A549 (cell line): ENCODE measurements at regions of chr1 and their contacts with region 1.

Region 1: DNA sequence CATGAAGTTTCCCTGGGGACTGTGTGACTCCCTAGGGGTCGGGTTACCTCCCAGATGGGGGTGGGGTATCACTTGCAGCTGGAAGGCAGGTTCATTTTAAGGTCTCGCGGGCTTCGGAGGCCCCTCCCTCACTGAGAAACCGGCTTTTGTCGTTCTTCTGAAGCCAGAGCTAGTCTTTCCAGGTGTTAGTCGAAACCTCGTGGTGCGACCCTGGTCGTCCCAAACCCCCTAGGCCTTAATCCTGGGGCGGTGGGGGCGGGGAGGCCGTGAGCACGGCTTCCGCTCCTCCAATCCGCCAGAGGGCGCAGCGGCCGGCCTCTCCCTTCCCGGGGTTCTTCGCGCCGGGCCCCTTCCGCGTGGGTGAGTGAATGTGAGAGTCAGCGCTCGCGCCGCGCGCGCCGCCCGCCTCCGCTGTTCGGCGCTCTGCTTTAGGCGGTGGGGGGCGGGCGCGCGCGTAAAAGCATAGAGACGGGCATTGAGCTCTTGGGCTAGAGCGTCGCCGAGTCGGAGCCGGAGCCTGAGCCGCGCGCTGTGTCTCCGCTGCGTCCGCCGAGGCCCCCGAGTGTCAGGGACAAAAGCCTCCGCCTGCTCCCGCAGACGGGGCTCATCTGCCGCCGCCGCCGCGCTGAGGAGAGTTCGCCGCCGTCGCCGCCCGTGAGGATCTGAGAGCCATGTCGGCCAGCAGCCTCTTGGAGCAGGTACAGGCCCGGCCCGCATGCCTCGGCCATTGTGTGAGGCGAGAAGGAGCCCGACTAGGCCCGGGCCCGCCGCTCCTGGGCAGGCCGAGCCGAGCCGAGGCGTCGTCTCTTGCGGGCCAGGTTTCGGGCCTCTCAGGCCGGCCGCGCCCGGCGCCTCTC is at the start of gene YTHDF2:
- DNase-seq: peak; percentile 69 to 95
- ATAC-seq: peak; percentile 96 to 98
- H3K4me3 ChIP-seq: peak within 1 kb of the TSS; percentile 98
- H3K27ac ChIP-seq: peak within 1 kb of the TSS; percentile 98 to 100
- H3K4me1 ChIP-seq: peaks cover 19% of the 10 kb centered on the region; the same call in 2 of the 3 replicates
- CTCF ChIP-seq: peak; percentile 69
- EP300 ChIP-seq: no peak
- POLR2A ChIP-seq: peak; percentile 17; the same call in 1 of the 2 replicates
- RAD21 ChIP-seq: 0 out of 5 replicates have a peak, but pooled peaks of 1 of the 2 experiments have one; percentile 24
- polyA plus RNA-seq, gene YTHDF2: 55.6 and 59.3 TPM in 2 replicates

Region 2: DNA sequence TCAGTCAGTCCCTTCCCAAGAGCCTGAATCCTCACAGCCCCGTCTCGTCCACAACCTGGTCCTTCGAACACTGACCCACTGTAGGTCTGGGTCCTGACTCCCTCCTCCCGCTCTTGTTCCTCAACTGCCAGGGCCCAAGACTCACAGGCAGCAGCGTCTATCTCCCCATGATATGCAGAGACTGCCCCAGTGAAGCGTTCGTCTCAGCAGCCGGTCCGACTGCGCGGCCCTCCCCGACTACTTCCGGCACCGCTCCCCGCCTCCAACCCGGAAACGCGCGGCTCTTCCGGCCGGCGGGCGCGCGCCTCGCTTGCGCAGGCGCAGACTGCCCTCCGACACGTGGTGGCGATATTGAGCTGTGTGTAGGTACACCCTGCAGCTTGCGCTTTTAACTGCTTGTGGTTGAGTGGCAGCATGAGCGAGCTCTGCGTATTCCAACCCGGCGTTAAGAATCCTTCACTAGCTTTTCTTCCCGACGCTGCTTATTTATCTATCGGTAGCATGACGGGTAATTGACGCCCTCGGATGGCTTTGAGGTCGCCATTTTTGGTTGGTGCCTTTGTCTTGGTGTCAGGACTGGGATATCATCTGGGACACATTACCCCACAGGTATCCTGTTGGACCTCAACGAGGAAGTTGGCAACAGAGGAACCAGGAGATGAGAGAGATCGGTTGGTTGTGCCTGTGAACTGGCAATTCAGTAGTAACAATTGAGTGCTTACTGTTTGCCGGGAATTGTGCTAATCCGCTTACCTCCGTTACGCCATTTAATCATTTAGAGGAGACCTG is 93.6 kb before region 1 on chr1 and contains the start of gene TAF12:
- CTCF ChIA-PET with region 1: interaction called, 4 read pairs
- POLR2A ChIA-PET with region 1: interaction called, 23 read pairs
- DNase-seq: peak; percentile 82 to 94
- ATAC-seq: peak; percentile 95 to 96
- H3K4me3 ChIP-seq: peak within 1 kb of the TSS; percentile 67
- H3K27ac ChIP-seq: peak within 1 kb of the TSS; percentile 95 to 97
- H3K4me1 ChIP-seq: peaks cover 24% of the 10 kb centered on the region; the same call in 2 of the 3 replicates
- CTCF ChIP-seq: peak; percentile 40
- EP300 ChIP-seq: no peak
- POLR2A ChIP-seq: peak; percentile 99
- RAD21 ChIP-seq: peak; percentile 20 to 45; a peak in 3 of 5 replicates
- polyA plus RNA-seq, gene TAF12: 33.8 and 38.3 TPM in 2 replicates

Region 3: GRCh38 chr1:28648474-28649198 is 88.0 kb before region 1 on chr1 and contains the start of gene RNU11:
- CTCF ChIA-PET with region 1: interaction called, 9 read pairs
- POLR2A ChIA-PET with region 1: interaction called, 23 read pairs
- DNase-seq: peak; percentile 77 to 97
- ATAC-seq: peak; percentile 88 to 93
- H3K4me3 ChIP-seq: peak within 1 kb of the TSS; percentile 40
- H3K27ac ChIP-seq: peak within 1 kb of the TSS; percentile 96 to 97
- H3K4me1 ChIP-seq: peaks cover 15% of the 10 kb centered on the region; the same call in 2 of the 3 replicates
- CTCF ChIP-seq: no peak
- EP300 ChIP-seq: 0 out of 5 replicates have a peak, but pooled peaks of 1 of the 2 experiments have one; percentile 29
- POLR2A ChIP-seq: peak; percentile 99
- RAD21 ChIP-seq: no peak
- polyA plus RNA-seq, gene RNU11: not detected in 2 replicates

Region 4: DNA sequence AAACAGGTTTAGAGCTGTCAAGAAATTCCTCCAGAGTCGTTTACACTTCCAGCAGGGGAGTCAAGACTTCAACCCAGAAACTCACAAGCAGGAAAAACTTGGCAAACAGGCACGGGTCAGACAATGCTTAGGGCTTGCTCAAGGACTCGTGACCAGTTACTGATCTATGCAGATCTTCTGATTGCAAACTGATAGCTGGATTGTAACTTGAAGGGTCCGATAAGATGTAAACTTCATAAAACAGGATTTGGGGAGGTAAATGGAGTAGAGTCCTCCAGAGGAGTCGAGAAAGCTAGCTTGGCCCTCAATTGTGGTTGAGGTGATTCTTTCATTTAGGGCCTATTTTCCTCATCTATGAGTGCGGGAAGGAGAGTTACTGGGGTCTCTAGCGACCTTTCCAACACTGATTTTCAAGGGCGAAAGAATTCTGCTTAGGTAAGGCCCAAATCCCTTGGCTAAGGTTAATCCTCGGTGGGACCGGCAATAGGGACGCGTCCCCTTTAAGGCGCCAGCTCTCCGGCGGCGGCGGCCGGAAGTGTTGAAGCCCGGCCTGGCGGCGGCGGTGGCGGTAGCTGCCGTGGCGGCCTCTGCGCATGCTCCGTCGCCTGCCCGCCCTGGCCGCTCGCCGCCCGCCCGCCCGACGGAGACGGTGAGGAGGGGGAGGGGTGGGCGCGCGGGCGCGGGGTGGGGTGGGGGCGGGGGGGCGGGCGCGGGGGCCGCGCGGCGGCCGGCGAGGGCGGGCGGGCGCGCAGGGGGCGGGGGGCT is 68.3 kb before region 1 on chr1 and contains the start of gene GMEB1:
- CTCF ChIA-PET with region 1: interaction called, 8 read pairs
- POLR2A ChIA-PET with region 1: interaction called, 27 read pairs
- DNase-seq: peak; percentile 69 to 87
- ATAC-seq: peak; percentile 89 to 94
- H3K4me3 ChIP-seq: peak within 1 kb of the TSS; percentile 100
- H3K27ac ChIP-seq: peak within 1 kb of the TSS; percentile 100
- H3K4me1 ChIP-seq: peaks cover 4% of the 10 kb centered on the region; the same call in 1 of the 3 replicates
- CTCF ChIP-seq: no peak
- EP300 ChIP-seq: no peak
- POLR2A ChIP-seq: no peak
- RAD21 ChIP-seq: no peak
- polyA plus RNA-seq, gene GMEB1: 6.9 and 7.1 TPM in 2 replicates

Region 5: GRCh38 chr1:28720376-28720775 is 16.3 kb before region 1 on chr1:
- CTCF ChIA-PET with region 1: interaction called, 31 read pairs
- POLR2A ChIA-PET with region 1: interaction called, 5 read pairs
- DNase-seq: no peak
- ATAC-seq: no peak
- H3K4me3 ChIP-seq: no peak overlapping the region
- H3K27ac ChIP-seq: no peak overlapping the region
- H3K4me1 ChIP-seq: peaks cover 7% of the 10 kb centered on the region; the same call in 2 of the 3 replicates
- CTCF ChIP-seq: no peak
- EP300 ChIP-seq: no peak
- POLR2A ChIP-seq: no peak
- RAD21 ChIP-seq: no peak

Region 6: DNA sequence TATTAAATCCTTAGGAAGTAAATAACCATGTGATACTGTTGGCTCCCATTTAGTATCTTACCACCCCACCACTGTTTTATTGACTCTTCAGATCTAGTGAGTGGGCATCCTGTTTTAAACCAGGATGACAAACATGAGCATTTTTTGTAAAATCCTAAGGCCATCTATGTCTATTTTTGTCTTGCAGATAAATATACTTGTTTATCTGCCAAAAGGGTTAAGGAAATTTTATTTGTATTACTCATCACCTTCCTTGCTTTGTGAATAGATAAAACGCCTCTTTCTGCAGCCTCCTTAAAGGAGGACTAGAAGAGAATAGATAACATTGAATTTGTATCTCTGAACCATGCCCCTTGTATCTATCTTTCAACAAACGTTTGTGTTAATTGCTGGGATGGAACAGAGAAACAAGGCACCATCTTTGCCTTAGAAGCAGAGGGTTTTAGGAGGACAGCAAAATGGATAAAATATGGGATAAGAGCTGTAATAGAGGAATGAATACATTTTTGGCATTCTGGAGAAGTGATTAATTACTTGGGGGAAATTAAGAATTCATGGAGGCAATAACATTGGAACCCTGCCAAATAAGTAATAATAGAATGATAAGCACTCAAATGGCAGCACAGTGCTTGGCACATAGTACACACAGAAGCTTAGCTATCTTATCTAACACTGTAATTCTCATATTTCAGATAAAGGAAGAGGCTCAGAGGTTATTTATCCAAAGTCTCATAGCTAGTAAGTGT is 14.8 kb after region 1 on chr1:
- CTCF ChIA-PET with region 1: interaction called, 20 read pairs
- POLR2A ChIA-PET with region 1: interaction called, 10 read pairs
- DNase-seq: no peak
- ATAC-seq: peak in 1 of 2 experiments; percentile 30; a peak in 2 of 6 replicates
- H3K4me3 ChIP-seq: no peak overlapping the region
- H3K27ac ChIP-seq: no peak overlapping the region
- H3K4me1 ChIP-seq: peaks cover 33% of the 10 kb centered on the region
- CTCF ChIP-seq: no peak
- EP300 ChIP-seq: no peak
- POLR2A ChIP-seq: no peak
- RAD21 ChIP-seq: no peak

Region 7: DNA sequence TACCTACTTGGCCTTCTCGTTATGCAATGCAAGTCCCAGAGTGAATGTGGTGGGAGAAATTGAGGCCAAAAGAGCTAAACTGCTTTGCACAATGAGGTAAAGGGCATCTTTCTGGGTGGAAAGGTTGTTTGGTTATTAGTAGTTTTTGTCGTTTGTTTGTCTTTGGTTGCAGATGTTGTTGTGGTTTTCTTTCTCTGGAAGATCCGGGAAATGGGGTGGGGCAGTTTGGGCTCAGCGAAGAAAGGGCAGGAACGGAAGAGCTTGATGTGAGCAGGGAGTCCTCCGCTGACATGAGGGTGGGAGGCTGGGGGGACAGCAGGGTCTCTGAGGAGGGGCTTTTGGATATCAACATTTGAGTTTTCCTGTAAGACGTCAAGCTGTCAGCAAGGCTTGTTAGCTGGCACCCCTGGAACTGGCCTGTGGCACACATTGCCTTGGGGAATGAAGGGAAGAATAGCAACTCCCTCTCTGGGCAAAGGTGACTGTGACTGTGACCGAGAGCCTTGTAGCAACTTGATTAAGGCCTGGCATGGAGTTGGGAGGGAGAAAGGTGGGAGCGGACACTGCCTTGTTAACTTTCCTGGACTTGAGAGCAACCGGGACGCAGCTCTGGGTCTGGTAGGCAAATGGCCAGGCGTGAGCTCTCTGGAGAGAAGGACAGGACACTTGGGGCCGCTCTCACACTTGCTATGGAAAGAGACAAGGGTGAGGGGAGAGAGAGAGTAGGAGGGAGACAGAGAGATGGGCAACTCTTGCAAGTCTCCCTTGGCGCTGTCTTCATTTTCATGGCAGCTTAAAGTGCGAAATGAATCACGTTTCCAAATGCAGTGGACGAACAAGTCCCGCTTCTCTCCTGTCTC is 59.9 kb after region 1 on chr1:
- CTCF ChIA-PET with region 1: no interaction called
- POLR2A ChIA-PET with region 1: no interaction called
- DNase-seq: no peak
- ATAC-seq: peak in 1 of 2 experiments; percentile 51; a peak in 3 of 6 replicates
- H3K4me3 ChIP-seq: no peak overlapping the region
- H3K27ac ChIP-seq: no peak overlapping the region
- H3K4me1 ChIP-seq: no peaks in the 10 kb centered on the region
- CTCF ChIP-seq: no peak
- EP300 ChIP-seq: no peak
- POLR2A ChIP-seq: no peak
- RAD21 ChIP-seq: peak in 1 of 2 experiments; percentile 36; a peak in 1 of 5 replicates

Region 8: GRCh38 chr1:28905921-28906666 is 169.4 kb after region 1 on chr1:
- CTCF ChIA-PET with region 1: no interaction called
- POLR2A ChIA-PET with region 1: no interaction called
- DNase-seq: no peak
- ATAC-seq: no peak
- H3K4me3 ChIP-seq: no peak overlapping the region
- H3K27ac ChIP-seq: no peak overlapping the region
- H3K4me1 ChIP-seq: no peaks in the 10 kb centered on the region
- CTCF ChIP-seq: no peak
- EP300 ChIP-seq: no peak
- POLR2A ChIP-seq: no peak
- RAD21 ChIP-seq: no peak